K562 (cell line): ENCODE measurements at regions of chr6 and their contacts with region 1.

Region 1: GRCh38 chr6:37169496-37170272 is at the start of gene PIM1:
- DNase-seq: peak; percentile 98 to 100 (median 99)
- ATAC-seq: peak; percentile 79
- H3K4me3 ChIP-seq: peak within 1 kb of the TSS; percentile 97
- H3K27ac ChIP-seq: peak within 1 kb of the TSS; percentile 91
- H3K4me1 ChIP-seq: peaks cover 7 to 29% of the 10 kb centered on the region in 2 experiments; a peak in 4 of 5 replicates
- H3K27me3 ChIP-seq: no peaks in the 10 kb centered on the region
- CTCF ChIP-seq: peak in 1 of 3 experiments; percentile 10; a peak in 2 of 6 replicates
- EP300 ChIP-seq: peak; percentile 51
- POLR2A ChIP-seq: peak; percentile 51; the same call in 1 of the 2 replicates
- RAD21 ChIP-seq: peak; percentile 2 to 12; a peak in 3 of 4 replicates
- polyA plus RNA-seq, gene PIM1: 19.0 to 62.4 TPM

Region 2: DNA sequence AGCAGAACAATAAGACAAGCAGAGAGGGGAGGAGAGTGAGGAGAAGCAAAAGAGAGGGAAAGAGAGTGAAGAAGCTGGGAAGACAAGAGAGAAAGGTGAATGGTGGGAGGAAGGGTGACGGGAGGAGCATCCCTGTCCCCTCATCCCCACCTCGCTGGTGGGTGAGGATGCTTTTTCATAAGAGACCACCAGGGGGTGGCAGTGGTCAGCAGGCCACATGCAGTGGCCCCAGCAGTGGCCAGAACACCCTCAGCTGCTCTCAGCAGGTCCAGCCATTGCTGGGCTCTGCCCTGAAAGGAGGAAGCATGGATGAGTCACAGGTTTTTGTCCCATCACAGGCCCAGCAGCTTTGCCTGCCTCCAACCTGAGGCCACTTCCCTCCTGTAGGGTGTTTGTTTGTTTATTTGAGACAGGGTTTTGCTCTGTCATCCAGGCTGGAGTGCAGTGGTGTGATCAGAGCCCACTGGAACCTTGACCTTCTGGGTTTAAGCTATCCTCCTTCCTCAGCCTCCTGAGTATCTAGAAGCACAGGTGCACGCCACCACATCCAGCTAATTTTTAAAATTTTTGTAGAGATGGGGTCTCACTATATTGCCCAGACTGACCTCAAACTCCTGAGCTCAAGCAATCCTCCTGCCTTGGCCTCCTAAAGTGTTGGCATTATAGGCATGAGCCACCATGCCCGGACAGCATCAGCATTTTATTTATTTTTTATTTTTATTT is 140.3 kb before region 1 on chr6:
- CTCF ChIA-PET with region 1: interaction called, 77 read pairs
- POLR2A ChIA-PET with region 1: interaction called, 128 read pairs
- in situ Hi-C with region 1: loop called (anchors 10 kb)
- intact Hi-C with region 1: loop called (anchors 1 kb)
- DNase-seq: peak; percentile 91 to 97 (median 94)
- ATAC-seq: peak; percentile 99
- H3K4me3 ChIP-seq: no peak overlapping the region
- H3K27ac ChIP-seq: peak overlapping the region; percentile 46
- H3K4me1 ChIP-seq: peaks cover 15 to 63% of the 10 kb centered on the region in 2 experiments
- H3K27me3 ChIP-seq: no peaks in the 10 kb centered on the region
- CTCF ChIP-seq: peak; percentile 96 to 99 (median 97)
- EP300 ChIP-seq: peak; percentile 76
- POLR2A ChIP-seq: no peak
- RAD21 ChIP-seq: peak; percentile 99 to 100

Region 3: DNA sequence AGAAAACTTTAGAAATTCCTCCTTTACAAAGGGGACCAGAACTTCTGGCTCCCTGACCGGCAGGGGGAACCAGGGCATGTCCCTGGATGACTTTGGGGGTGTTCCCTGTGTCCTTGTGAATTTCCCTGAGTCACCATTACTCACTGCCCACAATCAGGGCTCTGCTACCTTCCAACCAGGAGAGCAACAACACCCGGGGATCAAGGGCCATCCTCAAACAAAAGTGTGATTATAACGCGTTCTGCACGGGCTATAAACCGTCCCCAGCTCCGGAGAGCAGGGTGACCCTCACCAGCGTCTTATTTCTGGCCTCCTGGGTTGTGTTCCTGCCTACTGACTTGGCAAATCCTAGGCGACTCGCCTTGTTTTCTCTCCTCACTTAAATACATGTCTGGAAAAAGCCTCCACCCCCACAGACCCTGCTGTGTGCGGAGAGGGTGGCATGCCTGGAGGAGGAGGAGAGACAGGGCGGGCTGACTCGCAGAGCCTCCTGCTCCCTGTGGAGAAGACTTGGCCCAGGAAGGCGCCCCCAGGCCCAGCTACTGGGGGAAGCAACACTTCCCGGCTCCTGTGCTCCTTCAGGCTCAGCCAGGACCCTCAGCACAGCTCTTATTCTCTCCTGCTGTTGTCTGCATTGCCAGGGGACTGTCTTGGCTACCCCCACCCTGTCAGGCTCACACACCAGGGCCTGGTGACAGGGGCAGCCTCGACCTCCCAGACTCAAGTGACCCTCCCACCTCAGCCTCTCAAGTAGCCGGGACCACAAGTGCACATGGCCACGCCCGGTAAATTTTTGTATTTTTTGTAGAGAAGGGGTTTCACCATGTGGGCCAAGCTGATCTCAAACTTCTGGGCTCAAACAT is 110.1 kb before region 1 on chr6:
- CTCF ChIA-PET with region 1: interaction called, 38 read pairs
- POLR2A ChIA-PET with region 1: interaction called, 17 read pairs
- in situ Hi-C with region 1: loop called (anchors 5 kb)
- intact Hi-C with region 1: no loop called
- DNase-seq: peak; percentile 92 to 97 (median 94)
- ATAC-seq: peak; percentile 85
- H3K4me3 ChIP-seq: no peak overlapping the region
- H3K27ac ChIP-seq: peak overlapping the region; percentile 86
- H3K4me1 ChIP-seq: peaks cover 48 to 61% of the 10 kb centered on the region in 2 experiments
- H3K27me3 ChIP-seq: no peaks in the 10 kb centered on the region
- CTCF ChIP-seq: peak; percentile 81 to 93 (median 87)
- EP300 ChIP-seq: peak; percentile 95
- POLR2A ChIP-seq: peak; percentile 61
- RAD21 ChIP-seq: peak; percentile 92 to 96

Region 4: GRCh38 chr6:37110500-37111461 is 58.9 kb before region 1 on chr6:
- CTCF ChIA-PET with region 1: no interaction called
- POLR2A ChIA-PET with region 1: interaction called, 5 read pairs
- in situ Hi-C with region 1: no loop called
- intact Hi-C with region 1: loop called (anchors 2 kb)
- DNase-seq: no peak
- ATAC-seq: peak; percentile 27
- H3K4me3 ChIP-seq: no peak overlapping the region
- H3K27ac ChIP-seq: peak overlapping the region; percentile 73
- H3K4me1 ChIP-seq: peaks cover 46 to 58% of the 10 kb centered on the region in 2 experiments
- H3K27me3 ChIP-seq: no peaks in the 10 kb centered on the region
- CTCF ChIP-seq: no peak
- EP300 ChIP-seq: no peak; the same call in 1 of the 2 replicates
- POLR2A ChIP-seq: no peak
- RAD21 ChIP-seq: no peak

Region 5: GRCh38 chr6:37182736-37183590 is 13.3 kb after region 1 on chr6:
- CTCF ChIA-PET with region 1: no interaction called
- POLR2A ChIA-PET with region 1: interaction called, 30 read pairs
- in situ Hi-C with region 1: no loop called
- intact Hi-C with region 1: no loop called
- DNase-seq: peak; percentile 65 to 99 (median 78)
- ATAC-seq: peak; percentile 90
- H3K4me3 ChIP-seq: no peak overlapping the region
- H3K27ac ChIP-seq: peak overlapping the region; percentile 97
- H3K4me1 ChIP-seq: peaks cover 58 to 65% of the 10 kb centered on the region in 2 experiments
- H3K27me3 ChIP-seq: no peaks in the 10 kb centered on the region
- CTCF ChIP-seq: no peak
- EP300 ChIP-seq: peak; percentile 100
- POLR2A ChIP-seq: peak; percentile 60
- RAD21 ChIP-seq: peak; percentile 29 to 43; a peak in 3 of 4 replicates

Region 6: DNA sequence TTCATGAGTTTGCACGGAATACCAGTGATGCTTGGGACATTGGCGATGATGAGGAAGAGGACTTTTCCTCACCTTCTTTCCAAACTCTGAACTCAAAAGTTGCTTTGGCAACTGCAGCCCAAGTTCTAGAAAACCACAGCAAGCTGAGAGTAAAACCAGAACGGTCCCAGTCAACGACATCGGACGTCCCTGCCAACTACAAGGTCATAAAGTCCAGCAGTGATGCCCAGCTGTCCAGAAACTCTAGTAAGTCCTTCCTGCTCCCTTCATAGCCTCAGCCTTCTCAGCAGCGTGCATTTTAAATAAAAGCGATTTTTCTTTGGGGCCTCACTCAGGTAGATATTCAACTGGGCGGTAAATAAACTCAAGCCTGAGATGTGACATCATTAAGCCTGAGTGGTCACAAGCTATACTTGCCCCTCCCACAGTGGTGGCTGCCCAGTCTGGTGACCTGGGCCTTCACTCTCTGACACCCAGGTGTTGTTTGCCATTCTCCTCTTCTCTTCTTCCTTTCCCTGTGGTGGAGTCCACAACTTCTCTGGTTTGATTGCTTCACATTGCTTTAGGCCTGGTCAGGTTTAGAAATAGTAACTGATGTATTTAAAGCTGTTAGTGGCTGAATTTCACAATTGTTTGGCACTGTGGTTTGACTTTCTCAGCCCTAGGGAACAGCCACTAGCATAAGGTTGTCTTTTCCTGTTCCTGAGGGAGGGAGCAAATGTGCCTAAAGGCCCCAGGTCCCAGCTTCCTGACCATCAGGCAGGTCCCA is 109.9 kb after region 1 on chr6:
- CTCF ChIA-PET with region 1: no interaction called
- POLR2A ChIA-PET with region 1: no interaction called
- in situ Hi-C with region 1: no loop called
- intact Hi-C with region 1: no loop called
- DNase-seq: no peak
- ATAC-seq: no peak; the same call in 2 of the 3 replicates
- H3K4me3 ChIP-seq: no peak overlapping the region
- H3K27ac ChIP-seq: no peak overlapping the region
- H3K4me1 ChIP-seq: peaks cover 0 to 2% of the 10 kb centered on the region in 2 experiments; a peak in 2 of 5 replicates
- H3K27me3 ChIP-seq: no peaks in the 10 kb centered on the region
- CTCF ChIP-seq: no peak
- EP300 ChIP-seq: no peak
- POLR2A ChIP-seq: no peak
- RAD21 ChIP-seq: no peak